CD4-positive, alpha-beta memory T cell (primary cell): ENCODE measurements at regions of chr15 and their contacts with region 1.

Region 1: DNA sequence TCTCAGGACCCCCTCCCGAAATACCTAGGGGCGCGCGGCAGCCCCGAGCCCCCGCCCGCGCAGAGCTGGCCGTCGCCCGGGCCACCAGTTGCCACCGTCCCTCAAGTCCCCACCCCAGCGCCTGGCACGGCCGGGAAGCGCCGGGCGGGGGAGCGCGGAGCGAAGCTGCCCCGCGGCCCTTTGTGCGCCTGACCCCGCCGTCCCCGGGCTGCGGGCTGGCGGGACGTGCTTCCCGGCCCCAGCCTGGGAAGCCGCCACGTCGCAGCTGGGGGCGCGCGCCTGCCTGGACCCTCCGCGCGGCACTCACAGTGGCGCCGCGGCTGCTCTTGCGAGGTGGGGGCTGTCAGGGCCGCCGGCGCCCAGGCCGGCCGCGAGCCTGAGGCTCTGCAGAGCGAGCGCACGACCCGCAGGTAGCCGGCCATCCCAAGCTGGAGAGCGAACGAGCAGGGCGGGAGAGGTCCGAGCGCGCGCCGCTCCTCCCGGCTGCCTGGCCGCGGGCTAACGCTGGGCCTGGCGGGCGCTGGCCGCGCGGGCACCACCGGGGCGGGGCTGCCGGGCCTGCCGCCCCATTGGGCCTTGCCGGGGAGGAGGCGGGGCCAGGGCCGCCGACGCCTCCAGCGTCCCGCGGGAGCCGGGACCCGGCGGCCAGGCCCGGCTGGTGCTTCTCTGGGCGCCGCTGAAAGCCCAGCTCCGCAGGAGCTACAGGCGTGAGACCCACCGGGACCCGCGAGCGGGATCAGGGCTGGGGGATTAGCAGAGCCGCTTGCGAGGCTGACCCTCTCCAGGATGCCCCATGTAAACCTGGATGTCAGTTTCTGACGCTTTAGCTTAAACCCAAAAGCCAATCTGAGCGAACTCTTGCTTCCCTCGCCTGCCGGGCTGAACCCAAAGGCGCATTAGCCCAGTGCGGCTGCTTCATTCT is at the start of gene IDH2:
- DNase-seq: peak; percentile 65 to 82 (median 75)
- H3K4me3 ChIP-seq: peak within 1 kb of the TSS; percentile 70 to 79
- H3K4me3 Mint-ChIP-seq: peak within 1 kb of the TSS; percentile 85 to 97 (median 90)
- H3K27ac ChIP-seq: peak within 1 kb of the TSS; percentile 65
- H3K27ac Mint-ChIP-seq: peak within 1 kb of the TSS; percentile 86 to 100 (median 98)
- H3K4me1 ChIP-seq: peaks cover 47% of the 10 kb centered on the region
- H3K4me1 Mint-ChIP-seq: peaks cover 35 to 55% (median 49%) of the 10 kb centered on the region in 4 donors
- H3K27me3 ChIP-seq: no peaks in the 10 kb centered on the region
- H3K27me3 Mint-ChIP-seq: no peaks in the 10 kb centered on the region
- total RNA-seq, gene IDH2: 41.2 to 43.6 TPM

Region 2: DNA sequence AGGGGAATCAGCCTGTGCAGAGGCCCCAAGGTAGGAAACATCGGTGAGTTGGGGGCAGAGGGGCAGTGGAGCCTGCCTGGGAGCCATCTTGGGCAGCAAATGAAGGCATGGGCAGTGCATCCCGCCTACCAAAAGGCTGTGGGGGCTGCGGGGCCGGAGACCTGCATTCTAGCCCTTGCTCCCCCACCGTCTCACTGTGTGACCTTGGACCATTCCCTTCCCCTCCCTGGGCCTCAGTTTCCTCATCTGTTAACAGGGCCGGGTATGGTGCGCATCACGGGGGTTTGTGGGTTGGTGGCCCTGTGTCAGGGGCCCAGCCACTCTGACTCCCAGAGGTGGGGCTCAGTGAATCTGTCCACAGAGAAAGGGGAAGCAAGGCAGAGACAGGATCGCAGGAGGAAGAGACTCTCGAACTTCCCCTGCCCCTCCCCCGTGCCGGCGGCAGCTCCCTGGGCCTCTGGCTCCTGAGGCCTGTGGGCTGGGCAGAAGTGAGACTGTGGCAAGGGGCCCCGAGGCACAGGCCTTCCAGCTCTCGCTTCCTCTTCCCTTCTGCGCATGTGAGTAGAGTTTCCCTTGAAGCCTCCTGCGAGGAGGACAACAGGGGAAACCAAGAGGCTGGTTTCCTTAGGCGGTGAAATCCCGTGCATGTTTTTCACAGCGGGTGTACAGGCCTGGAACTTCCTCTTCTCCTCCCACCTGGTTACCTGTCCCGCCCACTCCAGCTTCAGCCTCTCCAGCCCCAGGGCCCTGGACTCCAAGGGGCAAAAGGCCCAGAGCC is 42.8 kb before region 1 on chr15:
- CTCF ChIA-PET with region 1: interaction called, 4 read pairs
- POLR2A ChIA-PET with region 1: interaction called, 8 read pairs
- intact Hi-C with region 1: loop called (anchors 5 kb)
- DNase-seq: peak; percentile 64 to 81 (median 72)
- H3K4me3 ChIP-seq: peak overlapping the region in 1 of 2 donors; percentile 51
- H3K4me3 Mint-ChIP-seq: peak overlapping the region in 7 of 8 donors; percentile 35 to 82 (median 71)
- H3K27ac ChIP-seq: peak overlapping the region; percentile 62
- H3K27ac Mint-ChIP-seq: peak overlapping the region; percentile 90 to 97 (median 94)
- H3K4me1 ChIP-seq: peaks cover 49% of the 10 kb centered on the region
- H3K4me1 Mint-ChIP-seq: peaks cover 37 to 70% (median 49%) of the 10 kb centered on the region in 4 donors
- H3K27me3 ChIP-seq: no peaks in the 10 kb centered on the region
- H3K27me3 Mint-ChIP-seq: no peaks in the 10 kb centered on the region

Region 3: GRCh38 chr15:90143166-90143655 is 41.0 kb after region 1 on chr15:
- CTCF ChIA-PET with region 1: interaction called, 4 read pairs
- POLR2A ChIA-PET with region 1: interaction called, 4 read pairs
- intact Hi-C with region 1: loop called (anchors 2 kb)
- DNase-seq: peak; percentile 50 to 62 (median 56)
- H3K4me3 ChIP-seq: no peak overlapping the region
- H3K4me3 Mint-ChIP-seq: peak overlapping the region in 5 of 8 donors; percentile 35 to 69 (median 60)
- H3K27ac ChIP-seq: no peak overlapping the region
- H3K27ac Mint-ChIP-seq: peak overlapping the region in 6 of 7 donors; percentile 62 to 92 (median 81)
- H3K4me1 ChIP-seq: peaks cover 18% of the 10 kb centered on the region
- H3K4me1 Mint-ChIP-seq: peaks cover 11 to 40% (median 21%) of the 10 kb centered on the region in 4 donors
- H3K27me3 ChIP-seq: no peaks in the 10 kb centered on the region
- H3K27me3 Mint-ChIP-seq: no peaks in the 10 kb centered on the region

Region 4: DNA sequence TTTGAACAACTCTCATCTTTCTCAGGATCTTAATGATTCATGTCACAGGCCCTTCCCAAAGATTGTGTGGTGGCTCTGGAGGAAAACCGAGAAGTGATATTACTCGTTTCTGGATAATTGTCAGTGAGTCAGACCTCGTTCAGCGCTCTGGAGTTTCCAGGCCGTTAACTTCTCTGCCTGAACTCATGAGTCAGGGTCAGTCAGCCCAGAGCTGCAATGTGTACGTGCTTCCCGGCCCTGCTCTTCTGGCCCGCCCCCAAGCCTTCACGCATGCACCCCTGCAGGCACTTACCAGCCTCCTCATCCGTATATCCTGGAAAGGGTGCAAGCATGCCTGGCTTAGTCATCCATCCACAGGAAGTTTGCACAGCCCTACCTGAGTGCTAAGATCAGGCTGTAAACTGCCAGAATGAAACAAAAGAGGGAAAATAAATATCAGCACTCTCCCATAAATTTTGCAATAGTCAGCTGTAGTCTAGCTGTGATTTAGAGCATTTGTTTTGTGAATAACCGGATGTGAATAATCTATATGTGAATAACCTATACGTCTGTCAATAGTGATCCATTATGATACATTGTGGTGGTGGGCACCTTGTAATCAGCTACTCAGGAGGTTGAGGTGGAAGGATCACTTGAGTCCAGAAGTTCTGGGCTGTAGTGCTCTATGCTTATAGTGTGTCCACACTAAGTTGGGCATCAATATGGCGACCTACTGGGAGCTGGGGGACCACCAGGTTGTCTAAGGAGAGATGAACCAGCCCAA is 63.6 kb after region 1 on chr15:
- CTCF ChIA-PET with region 1: no interaction called
- POLR2A ChIA-PET with region 1: no interaction called
- intact Hi-C with region 1: no loop called
- DNase-seq: no peak
- H3K4me3 ChIP-seq: no peak overlapping the region
- H3K4me3 Mint-ChIP-seq: no peak overlapping the region
- H3K27ac ChIP-seq: no peak overlapping the region
- H3K27ac Mint-ChIP-seq: peak overlapping the region in 1 of 7 donors; percentile 27
- H3K4me1 ChIP-seq: no peaks in the 10 kb centered on the region
- H3K4me1 Mint-ChIP-seq: peaks cover 0 to 5% (median 4%) of the 10 kb centered on the region in 4 donors
- H3K27me3 ChIP-seq: no peaks in the 10 kb centered on the region
- H3K27me3 Mint-ChIP-seq: peaks cover 1 to 2% of the 10 kb centered on the region in 2 donors

Region 5: GRCh38 chr15:90265271-90266060 is 163.2 kb after region 1 on chr15 and contains the start of gene NGRN:
- CTCF ChIA-PET with region 1: no interaction called
- POLR2A ChIA-PET with region 1: interaction called, 11 read pairs
- intact Hi-C with region 1: no loop called
- DNase-seq: peak; percentile 92 to 95 (median 94)
- H3K4me3 ChIP-seq: peak within 1 kb of the TSS; percentile 66 to 97
- H3K4me3 Mint-ChIP-seq: peak within 1 kb of the TSS; percentile 93 to 99 (median 98)
- H3K27ac ChIP-seq: peak within 1 kb of the TSS; percentile 95
- H3K27ac Mint-ChIP-seq: peak within 1 kb of the TSS; percentile 98 to 100 (median 99)
- H3K4me1 ChIP-seq: peaks cover 44% of the 10 kb centered on the region
- H3K4me1 Mint-ChIP-seq: peaks cover 26 to 62% (median 42%) of the 10 kb centered on the region in 4 donors
- H3K27me3 ChIP-seq: no peaks in the 10 kb centered on the region
- H3K27me3 Mint-ChIP-seq: no peaks in the 10 kb centered on the region
- total RNA-seq, gene NGRN: 53.7 to 59.2 TPM

Region 6: GRCh38 chr15:90465923-90466567 is 363.8 kb after region 1 on chr15:
- CTCF ChIA-PET with region 1: no interaction called
- POLR2A ChIA-PET with region 1: no interaction called
- intact Hi-C with region 1: no loop called
- DNase-seq: no peak
- H3K4me3 ChIP-seq: no peak overlapping the region
- H3K4me3 Mint-ChIP-seq: no peak overlapping the region
- H3K27ac ChIP-seq: no peak overlapping the region
- H3K27ac Mint-ChIP-seq: peak overlapping the region in 3 of 7 donors; percentile 48 to 82 (median 49)
- H3K4me1 ChIP-seq: no peaks in the 10 kb centered on the region
- H3K4me1 Mint-ChIP-seq: peaks cover 8 to 24% (median 15%) of the 10 kb centered on the region in 4 donors
- H3K27me3 ChIP-seq: no peaks in the 10 kb centered on the region
- H3K27me3 Mint-ChIP-seq: no peaks in the 10 kb centered on the region